Sigmoid colon (tissue), 7 donors: ENCODE measurements at regions of chr9 and their contacts with region 1.

Region 1: GRCh38 chr9:104907278-104907951 is 20.5 kb downstream of the ABCA1 start:
- DNase-seq: peak; percentile 73
- H3K4me3 ChIP-seq: no peak overlapping the region
- H3K27ac ChIP-seq: peak overlapping the region; percentile 64 to 86 (median 82)
- H3K4me1 ChIP-seq: peaks cover 0 to 98% (median 96%) of the 10 kb centered on the region in 4 donors
- H3K27me3 ChIP-seq: no peaks in the 10 kb centered on the region
- CTCF ChIP-seq: no peak
- EP300 ChIP-seq: peak in 1 of 4 donors; percentile 41
- POLR2A ChIP-seq: no peak

Region 2: GRCh38 chr9:104575456-104575855 is 332.0 kb before region 1 on chr9:
- intact Hi-C with region 1: no loop called
- DNase-seq: no peak
- H3K4me3 ChIP-seq: no peak overlapping the region
- H3K27ac ChIP-seq: no peak overlapping the region
- H3K4me1 ChIP-seq: no peaks in the 10 kb centered on the region
- H3K27me3 ChIP-seq: no peaks in the 10 kb centered on the region
- CTCF ChIP-seq: no peak
- EP300 ChIP-seq: no peak
- POLR2A ChIP-seq: no peak

Region 3: DNA sequence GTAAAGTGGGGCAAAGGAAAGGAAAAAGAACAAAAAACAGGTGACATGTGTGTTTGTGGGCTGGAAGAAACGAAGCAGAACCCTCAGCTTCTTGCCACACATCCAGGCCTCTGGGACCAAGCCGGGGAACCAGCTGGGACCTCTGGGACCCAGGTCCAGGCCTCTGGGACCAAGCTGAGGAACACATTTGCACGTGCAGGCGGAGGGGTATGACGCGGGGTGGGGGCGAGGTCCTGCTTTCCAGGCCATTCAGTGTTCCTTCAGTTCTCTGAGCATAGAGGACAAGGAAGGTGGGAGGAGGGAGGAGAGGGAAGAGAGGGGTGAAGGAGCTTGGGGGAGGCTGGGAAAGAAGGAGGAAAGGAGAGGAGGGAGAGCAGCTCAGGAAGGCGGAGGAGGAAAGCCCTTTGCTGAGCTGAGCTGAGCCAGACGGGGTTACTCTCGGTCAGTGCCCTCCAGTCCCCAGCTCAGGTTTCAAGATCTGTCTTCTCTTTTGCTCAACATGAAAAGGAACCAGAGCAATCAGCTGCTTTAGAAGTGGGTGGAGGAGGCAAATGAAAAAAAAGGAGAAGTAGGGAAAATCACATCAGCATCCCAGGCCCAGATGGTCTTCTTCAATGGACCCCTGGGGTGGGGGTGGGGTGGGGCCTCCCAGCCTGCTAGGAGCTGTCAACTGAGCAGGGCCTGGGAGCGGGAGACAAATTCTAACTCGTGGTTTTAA is 38.6 kb before region 1 on chr9:
- intact Hi-C with region 1: loop called (anchors 5 kb)
- DNase-seq: peak; percentile 88
- H3K4me3 ChIP-seq: no peak overlapping the region
- H3K27ac ChIP-seq: peak overlapping the region; percentile 51 to 85 (median 80)
- H3K4me1 ChIP-seq: peaks cover 0 to 94% (median 91%) of the 10 kb centered on the region in 4 donors
- H3K27me3 ChIP-seq: no peaks in the 10 kb centered on the region
- CTCF ChIP-seq: no peak
- EP300 ChIP-seq: peak in 2 of 4 donors; percentile 33 to 49
- POLR2A ChIP-seq: no peak